ENCODE measurements at regions of chr20 and their contacts with region 1.

Region 1: DNA sequence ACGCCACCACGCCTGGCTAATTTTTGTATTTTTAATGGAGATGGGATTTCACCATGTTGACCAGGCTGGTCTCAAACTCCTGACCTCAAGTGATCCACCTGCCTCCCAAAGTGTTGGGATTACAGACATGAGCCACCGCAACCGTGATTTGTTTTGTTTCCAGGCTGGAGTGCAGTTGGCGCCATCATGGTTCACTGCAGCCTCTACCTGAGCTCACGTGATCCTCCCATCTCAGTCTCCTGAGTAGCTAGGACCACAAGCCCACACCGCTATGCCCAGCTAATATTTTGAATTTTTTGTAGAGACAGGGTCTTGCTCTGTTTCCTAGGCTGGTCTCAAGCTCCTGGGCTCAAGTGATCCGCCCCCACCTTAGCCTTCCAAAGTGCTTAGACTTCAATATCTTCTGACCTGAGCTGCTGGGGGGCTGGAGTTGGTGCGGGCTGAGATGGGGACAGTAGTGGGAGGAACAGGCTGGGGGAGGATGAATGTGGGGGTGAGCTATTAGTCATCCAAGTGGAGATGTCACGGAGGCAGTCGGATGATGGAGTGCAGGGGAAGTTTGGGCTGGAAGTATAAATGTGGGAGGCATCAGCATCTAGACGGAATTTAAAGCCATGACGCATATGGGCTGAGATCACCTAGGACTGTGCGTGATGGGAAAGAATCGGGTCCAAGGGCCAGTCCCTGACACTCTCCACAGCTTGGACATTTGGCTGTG is 23.1 kb upstream of the ZMYND8 start:
- DNase-seq: peak; percentile 56 to 92
- ATAC-seq: peak; percentile 72 to 74
- H3K4me3 ChIP-seq: no peak overlapping the region
- H3K27ac ChIP-seq: peak overlapping the region; percentile 90 to 92
- H3K4me1 ChIP-seq: peaks cover 60% of the 10 kb centered on the region
- CTCF ChIP-seq: no peak
- EP300 ChIP-seq: peak; percentile 89 to 93
- POLR2A ChIP-seq: no peak
- RAD21 ChIP-seq: peak in 1 of 2 experiments; percentile 7; a peak in 3 of 5 replicates

Region 2: DNA sequence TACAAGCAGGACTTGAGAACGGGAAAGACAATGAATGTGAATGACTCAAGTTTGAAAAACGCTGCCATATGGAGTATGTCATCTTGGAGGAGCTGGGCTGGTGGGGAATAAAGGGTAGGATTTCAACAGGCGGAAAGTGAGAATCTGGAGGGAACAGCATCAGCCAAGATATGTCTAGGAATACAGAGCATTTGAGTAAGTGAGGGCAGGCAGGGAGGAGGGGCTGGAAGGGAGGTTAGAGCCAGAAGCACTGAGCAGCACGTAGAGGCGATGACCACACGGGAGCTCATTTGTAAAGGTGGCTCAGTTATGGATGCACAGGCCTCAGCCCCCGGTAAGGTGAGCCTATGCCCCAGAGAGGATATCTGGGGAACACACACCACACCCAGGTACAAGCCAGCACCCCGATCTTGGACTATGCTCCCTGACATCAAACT is 138.2 kb before region 1 on chr20:
- CTCF ChIA-PET with region 1: interaction called, 10 read pairs
- POLR2A ChIA-PET with region 1: no interaction called
- DNase-seq: no peak
- ATAC-seq: peak in 1 of 2 experiments; percentile 23; a peak in 2 of 6 replicates
- H3K4me3 ChIP-seq: no peak overlapping the region
- H3K27ac ChIP-seq: no peak overlapping the region
- H3K4me1 ChIP-seq: no peaks in the 10 kb centered on the region
- CTCF ChIP-seq: no peak
- EP300 ChIP-seq: no peak
- POLR2A ChIP-seq: no peak
- RAD21 ChIP-seq: no peak

Region 3: DNA sequence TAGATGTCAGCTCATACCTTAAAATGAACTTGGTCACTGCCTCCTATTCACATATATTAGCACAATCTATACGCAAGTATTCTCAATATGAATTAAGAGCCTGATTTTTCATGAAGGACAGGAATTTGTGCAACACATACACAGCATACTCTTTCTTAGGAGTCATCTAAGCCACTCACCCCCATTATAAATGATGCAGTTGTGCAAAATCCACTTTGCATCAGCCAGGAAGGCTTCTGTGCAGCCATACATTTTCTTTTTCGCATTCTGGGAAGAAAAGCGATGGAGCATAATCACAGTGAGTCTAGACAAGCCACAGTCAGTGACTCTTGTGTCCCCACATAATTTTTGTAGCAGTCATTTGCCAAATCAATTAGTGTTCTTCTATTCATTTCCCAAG is 89.6 kb before region 1 on chr20:
- CTCF ChIA-PET with region 1: interaction called, 25 read pairs
- POLR2A ChIA-PET with region 1: no interaction called
- DNase-seq: no peak
- ATAC-seq: no peak
- H3K4me3 ChIP-seq: no peak overlapping the region
- H3K27ac ChIP-seq: peak overlapping the region in 1 of 2 experiments; percentile 19; a peak in 2 of 6 replicates
- H3K4me1 ChIP-seq: peaks cover 4% of the 10 kb centered on the region; the same call in 2 of the 3 replicates
- CTCF ChIP-seq: no peak
- EP300 ChIP-seq: no peak
- POLR2A ChIP-seq: no peak
- RAD21 ChIP-seq: no peak

Region 4: DNA sequence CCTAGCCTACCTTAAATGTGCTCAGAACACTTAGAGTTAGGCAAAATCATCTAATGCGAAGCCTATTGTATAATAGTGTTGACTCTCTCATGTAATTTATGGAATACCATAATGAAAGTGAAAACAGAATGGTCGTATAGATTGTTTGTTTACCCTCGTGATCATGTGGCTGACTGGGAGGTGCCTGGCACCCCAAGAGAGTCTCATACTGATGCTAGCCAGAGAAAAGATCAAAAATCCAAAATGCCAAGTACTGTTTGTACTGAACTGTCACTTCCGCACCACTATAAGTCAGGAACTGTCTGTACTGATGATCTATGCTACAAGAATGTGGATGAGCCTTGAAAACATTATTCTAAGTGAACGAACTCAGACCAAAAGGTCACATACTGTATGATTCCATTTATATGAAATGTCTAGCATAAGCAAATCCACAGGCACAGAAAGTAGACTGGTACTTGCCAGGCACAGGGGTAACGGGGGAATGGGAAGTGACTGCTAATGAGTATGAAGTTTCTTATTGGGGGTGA is 45.5 kb before region 1 on chr20:
- CTCF ChIA-PET with region 1: interaction called, 131 read pairs
- POLR2A ChIA-PET with region 1: interaction called, 3 read pairs
- DNase-seq: peak; percentile 77 to 91
- ATAC-seq: peak; percentile 90 to 94
- H3K4me3 ChIP-seq: peak overlapping the region; percentile 34
- H3K27ac ChIP-seq: peak overlapping the region; percentile 94 to 97
- H3K4me1 ChIP-seq: peaks cover 70% of the 10 kb centered on the region
- CTCF ChIP-seq: no peak
- EP300 ChIP-seq: peak; percentile 79 to 93; a peak in 3 of 5 replicates
- POLR2A ChIP-seq: no peak
- RAD21 ChIP-seq: peak; percentile 20 to 54; a peak in 4 of 5 replicates

Region 5: DNA sequence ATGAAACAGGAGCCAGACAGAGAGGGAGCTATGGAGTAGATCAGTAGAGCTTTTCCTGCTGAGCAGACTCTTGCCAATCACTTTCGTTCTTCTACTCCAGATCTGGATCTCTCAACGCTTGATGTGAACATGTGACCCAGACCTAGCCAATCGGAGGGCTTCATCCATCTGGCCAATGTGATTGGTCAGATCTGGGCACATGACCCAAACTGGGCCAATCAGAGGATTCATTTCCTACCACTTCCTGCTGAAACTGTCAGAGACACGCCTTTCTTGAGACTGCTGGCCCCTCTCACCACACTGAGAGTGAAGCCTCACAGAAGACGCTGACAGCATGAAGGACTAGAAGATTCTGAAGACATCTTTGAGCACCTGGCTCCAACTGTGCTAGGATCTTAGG is 21.1 kb after region 1 on chr20:
- CTCF ChIA-PET with region 1: interaction called, 14 read pairs
- POLR2A ChIA-PET with region 1: no interaction called
- DNase-seq: peak in 1 of 2 experiments; percentile 81
- ATAC-seq: peak in 1 of 2 experiments; percentile 69; a peak in 3 of 6 replicates
- H3K4me3 ChIP-seq: no peak overlapping the region
- H3K27ac ChIP-seq: peak overlapping the region in 1 of 2 experiments; percentile 34; a peak in 1 of 6 replicates
- H3K4me1 ChIP-seq: peaks cover 8% of the 10 kb centered on the region; the same call in 2 of the 3 replicates
- CTCF ChIP-seq: no peak
- EP300 ChIP-seq: no peak
- POLR2A ChIP-seq: no peak
- RAD21 ChIP-seq: no peak

Region 6: DNA sequence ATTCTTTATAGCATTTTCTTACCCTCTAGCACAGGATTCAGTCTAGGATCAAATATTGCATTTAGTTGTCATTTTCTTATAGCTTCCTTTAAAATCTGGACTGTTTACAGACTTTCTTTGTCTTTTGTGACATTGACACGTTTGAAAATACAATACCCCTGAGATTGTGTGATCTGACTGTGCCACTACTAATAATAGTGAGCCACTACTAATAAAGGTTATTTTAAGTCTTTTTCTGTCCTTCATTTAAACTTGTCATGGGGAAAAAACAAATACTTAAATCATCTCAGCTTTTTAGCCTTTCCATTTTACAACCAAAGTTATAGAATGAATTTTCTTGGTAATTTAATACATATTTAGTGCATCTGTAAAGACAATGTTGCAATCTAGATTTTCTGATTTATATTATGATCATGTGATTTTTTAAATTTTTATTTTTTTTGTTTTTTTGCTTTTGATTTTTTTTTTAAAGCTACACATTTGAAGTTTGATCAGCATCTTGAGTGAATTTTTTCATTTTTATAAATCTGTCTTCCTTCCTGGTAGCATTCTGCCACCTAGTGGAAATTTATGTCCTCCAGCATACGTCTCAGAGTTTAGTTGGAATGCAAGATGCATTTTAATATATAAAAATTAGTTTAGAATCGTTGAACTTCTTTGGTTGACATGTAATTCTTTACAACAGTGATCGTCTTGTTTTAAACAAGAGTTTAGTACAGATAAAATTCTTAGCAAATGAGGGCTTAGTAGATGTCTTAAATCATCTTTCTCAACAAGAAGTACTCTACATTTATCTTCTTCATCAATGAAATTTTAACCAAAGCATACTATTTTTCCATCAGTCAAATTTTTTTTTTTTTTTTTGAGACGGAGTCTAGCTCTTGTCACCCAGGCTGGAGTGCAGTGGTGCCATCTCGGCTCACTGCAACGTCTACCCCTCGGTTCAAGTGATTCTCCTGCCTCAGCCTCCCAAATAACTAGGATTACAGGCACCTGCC is 241.5 kb after region 1 on chr20:
- CTCF ChIA-PET with region 1: interaction called, 43 read pairs
- POLR2A ChIA-PET with region 1: interaction called, 8 read pairs
- DNase-seq: peak in 1 of 2 experiments; percentile 71
- ATAC-seq: peak; percentile 37 to 39; a peak in 2 of 6 replicates
- H3K4me3 ChIP-seq: no peak overlapping the region
- H3K27ac ChIP-seq: peak overlapping the region; percentile 58 to 60
- H3K4me1 ChIP-seq: peaks cover 47% of the 10 kb centered on the region
- CTCF ChIP-seq: peak; percentile 93
- EP300 ChIP-seq: no peak
- POLR2A ChIP-seq: no peak
- RAD21 ChIP-seq: peak; percentile 86 to 92

Measured in A549 (cell line).